SK-N-SH (cell line): ENCODE measurements at regions of chr3 and their contacts with region 1.

Region 1: GRCh38 chr3:81302045-81302444 is 459.4 kb downstream of the GBE1 start:
- DNase-seq: peak; percentile 77
- H3K4me3 ChIP-seq: no peak overlapping the region; a peak in 1 of 4 replicates
- H3K27ac ChIP-seq: peak overlapping the region in 1 of 2 experiments; percentile 82; a peak in 1 of 4 replicates
- H3K4me1 ChIP-seq: peaks cover 0 to 7% of the 10 kb centered on the region in 2 experiments; a peak in 2 of 4 replicates
- H3K27me3 ChIP-seq: no peaks in the 10 kb centered on the region
- CTCF ChIP-seq: peak; percentile 83
- EP300 ChIP-seq: peak in 1 of 2 experiments; percentile 97; a peak in 2 of 4 replicates
- RAD21 ChIP-seq: peak; percentile 87

Region 2: DNA sequence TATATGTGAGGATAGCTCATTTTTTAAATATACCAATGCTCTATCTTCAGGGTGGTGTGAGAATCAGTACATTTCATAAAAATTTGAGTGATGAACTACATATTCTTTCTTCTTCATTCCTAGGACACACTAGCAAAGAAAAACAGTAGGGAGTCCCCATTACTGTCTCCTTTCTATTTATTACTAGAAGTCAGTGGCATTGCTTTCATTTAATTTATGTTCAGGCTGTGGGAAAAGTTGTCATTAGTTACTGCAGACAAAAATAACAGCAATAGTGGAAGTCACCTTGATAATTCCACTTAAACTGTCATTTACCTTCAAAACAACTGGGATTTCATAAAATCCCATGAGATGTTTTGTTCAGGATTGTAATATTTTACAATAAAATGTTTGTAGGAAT is 13.0 kb after region 1 on chr3:
- CTCF ChIA-PET with region 1: interaction called, 27 read pairs
- POLR2A ChIA-PET with region 1: no interaction called
- DNase-seq: no peak
- H3K4me3 ChIP-seq: no peak overlapping the region
- H3K27ac ChIP-seq: no peak overlapping the region
- H3K4me1 ChIP-seq: no peaks in the 10 kb centered on the region
- H3K27me3 ChIP-seq: no peaks in the 10 kb centered on the region
- CTCF ChIP-seq: no peak
- EP300 ChIP-seq: no peak
- RAD21 ChIP-seq: no peak